ENCODE measurements at regions of chr9 and their contacts with region 1.

Region 1: DNA sequence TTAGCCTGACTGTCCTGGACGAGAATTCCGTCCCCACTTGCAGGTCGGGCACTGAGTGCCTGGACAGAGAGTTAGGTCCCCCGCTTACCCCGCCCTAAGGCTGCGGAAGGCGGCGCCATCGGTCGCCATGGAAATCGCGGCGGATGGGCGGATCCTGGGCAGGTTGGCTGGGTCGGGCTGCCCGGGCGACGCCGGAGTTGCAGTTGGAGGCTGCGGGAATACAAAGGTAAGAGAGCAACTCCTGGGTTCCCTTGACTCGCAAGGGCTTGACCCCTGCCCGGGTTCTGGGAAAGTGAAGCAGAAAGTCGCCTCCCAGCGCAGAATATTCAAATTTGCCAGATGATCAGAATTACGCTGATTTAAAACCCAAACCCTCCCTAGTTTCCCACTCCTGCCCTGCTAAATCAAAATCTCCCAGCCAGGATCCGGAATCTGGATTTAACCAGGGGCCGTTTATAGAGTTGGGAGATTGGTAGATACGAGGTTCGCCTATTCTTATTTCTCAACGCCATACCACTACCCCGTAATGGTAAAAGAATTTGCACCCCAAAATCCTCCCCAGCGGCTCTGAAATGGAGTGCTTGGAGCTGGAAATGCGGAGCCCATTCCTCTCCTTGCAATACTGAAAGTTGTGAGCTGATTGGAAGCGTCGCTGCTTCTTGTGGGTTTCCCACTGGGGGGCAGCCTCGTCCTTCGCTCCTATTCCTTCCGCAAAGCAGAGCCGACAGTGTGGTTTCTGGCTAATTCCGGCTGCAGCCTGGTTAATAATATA is 156.4 kb upstream of the RASEF start:
- DNase-seq: peak; percentile 57
- ATAC-seq: peak; percentile 76
- H3K4me3 Mint-ChIP-seq: peak overlapping the region; percentile 72
- H3K27ac Mint-ChIP-seq: no peak overlapping the region
- H3K4me1 Mint-ChIP-seq: peaks cover 13% of the 10 kb centered on the region
- H3K27me3 Mint-ChIP-seq: peaks cover 33% of the 10 kb centered on the region

Region 2: GRCh38 chr9:83403527-83404238 is 184.3 kb after region 1 on chr9:
- CTCF ChIA-PET with region 1: no interaction called
- DNase-seq: no peak
- ATAC-seq: no peak
- H3K4me3 Mint-ChIP-seq: no peak overlapping the region
- H3K27ac Mint-ChIP-seq: no peak overlapping the region
- H3K4me1 Mint-ChIP-seq: no peaks in the 10 kb centered on the region
- H3K27me3 Mint-ChIP-seq: no peaks in the 10 kb centered on the region

Region 3: DNA sequence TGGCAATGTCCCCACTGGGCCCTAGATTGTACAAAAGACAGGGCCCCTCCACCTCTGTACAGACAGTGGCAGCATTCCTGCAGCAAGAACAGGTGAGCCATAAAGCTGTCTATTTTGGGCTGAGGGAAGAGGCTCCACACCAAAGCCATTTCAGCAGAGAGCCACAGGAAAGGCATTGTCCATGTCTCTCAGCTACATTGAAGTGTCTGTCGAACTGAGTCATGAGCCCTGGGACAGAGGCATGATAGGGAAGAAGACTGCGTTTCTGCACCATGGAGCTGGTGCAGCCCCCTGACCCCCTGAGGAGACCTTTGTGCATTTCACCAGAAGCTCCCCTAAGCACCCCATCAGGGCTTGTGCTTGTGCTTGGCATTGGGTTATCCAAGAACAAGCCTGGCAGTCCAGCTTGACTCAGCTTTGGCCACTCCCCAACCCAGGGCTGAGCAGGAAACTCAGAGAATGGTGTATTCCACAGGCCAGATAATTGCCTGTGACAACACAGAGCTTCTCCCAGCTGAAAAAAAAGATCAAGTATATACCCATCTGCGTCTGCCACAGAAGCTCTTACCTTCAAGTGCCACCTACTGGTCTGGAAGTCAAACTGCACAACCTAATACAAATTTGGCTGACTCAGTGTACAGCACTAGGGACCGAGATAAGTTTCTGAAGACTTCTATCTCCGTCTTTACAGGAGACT is 324.8 kb after region 1 on chr9:
- CTCF ChIA-PET with region 1: interaction called, 10 read pairs
- DNase-seq: no peak
- ATAC-seq: peak; percentile 76
- H3K4me3 Mint-ChIP-seq: no peak overlapping the region
- H3K27ac Mint-ChIP-seq: no peak overlapping the region
- H3K4me1 Mint-ChIP-seq: no peaks in the 10 kb centered on the region
- H3K27me3 Mint-ChIP-seq: peaks cover 23% of the 10 kb centered on the region